ENCODE measurements at regions of chr13 and their contacts with region 1.

Region 1: DNA sequence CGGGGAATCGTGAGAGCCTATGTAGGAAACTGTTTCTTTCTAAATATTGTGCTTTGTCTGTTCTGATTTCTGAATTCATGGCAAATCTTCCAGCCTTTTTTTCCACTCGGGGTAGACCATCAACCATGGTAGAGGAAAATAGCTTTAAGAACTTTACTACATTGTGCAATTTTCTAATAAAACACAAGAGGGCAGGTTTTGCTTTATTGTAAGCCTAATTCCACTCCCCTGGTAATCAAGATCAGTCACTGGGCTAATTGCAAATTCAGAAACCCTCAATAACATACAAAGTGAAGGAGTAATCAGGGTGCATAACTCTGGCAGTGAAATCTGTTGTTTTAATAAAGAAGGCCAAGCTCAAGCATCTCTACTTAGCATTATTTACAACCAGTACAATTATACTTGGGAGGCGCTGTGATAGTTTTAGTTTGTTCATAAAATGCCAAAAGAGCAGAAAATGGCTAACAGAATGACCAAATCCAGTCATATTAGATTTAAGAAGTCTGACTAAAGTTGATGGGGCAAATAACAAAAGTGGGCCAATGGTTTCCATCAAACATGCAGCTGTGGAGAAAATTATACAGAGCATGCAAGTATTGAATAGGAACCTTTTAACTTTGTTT is 43.8 kb downstream of the DCT start:
- DNase-seq: no peak
- H3K4me3 Mint-ChIP-seq: no peak overlapping the region
- H3K27ac Mint-ChIP-seq: no peak overlapping the region
- H3K4me1 Mint-ChIP-seq: no peaks in the 10 kb centered on the region
- H3K27me3 Mint-ChIP-seq: no peaks in the 10 kb centered on the region
- CTCF ChIP-seq: no peak

Region 2: DNA sequence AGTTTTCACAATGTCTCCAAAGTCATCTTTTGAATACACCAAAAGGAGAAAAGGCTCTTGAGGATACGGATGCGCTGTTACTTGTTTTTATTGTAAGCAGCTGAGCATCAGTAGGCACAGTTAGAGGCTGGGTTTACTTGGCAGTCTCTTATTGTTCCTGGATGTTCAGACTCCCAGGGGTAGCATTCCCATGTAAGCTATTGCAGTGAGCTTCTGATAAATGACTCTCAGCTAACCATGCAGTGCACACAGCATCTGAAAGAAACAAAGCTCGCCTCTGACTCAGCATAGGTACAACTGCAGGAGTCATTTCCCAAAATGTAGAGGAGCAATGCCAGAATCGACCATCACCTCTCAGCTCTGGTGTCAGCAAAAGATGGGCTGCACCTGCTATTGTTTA is 41.0 kb before region 1 on chr13:
- CTCF ChIA-PET with region 1: no interaction called
- intact Hi-C with region 1: no loop called
- DNase-seq: no peak
- H3K4me3 Mint-ChIP-seq: no peak overlapping the region
- H3K27ac Mint-ChIP-seq: no peak overlapping the region
- H3K4me1 Mint-ChIP-seq: no peaks in the 10 kb centered on the region
- H3K27me3 Mint-ChIP-seq: no peaks in the 10 kb centered on the region
- CTCF ChIP-seq: no peak

Region 3: GRCh38 chr13:94549232-94550061 is 113.7 kb after region 1 on chr13:
- CTCF ChIA-PET with region 1: no interaction called
- intact Hi-C with region 1: loop called (anchors 10 kb)
- DNase-seq: peak; percentile 73
- H3K4me3 Mint-ChIP-seq: peak overlapping the region; percentile 71
- H3K27ac Mint-ChIP-seq: peak overlapping the region; percentile 94
- H3K4me1 Mint-ChIP-seq: no peaks in the 10 kb centered on the region
- H3K27me3 Mint-ChIP-seq: no peaks in the 10 kb centered on the region
- CTCF ChIP-seq: no peak

Region 4: DNA sequence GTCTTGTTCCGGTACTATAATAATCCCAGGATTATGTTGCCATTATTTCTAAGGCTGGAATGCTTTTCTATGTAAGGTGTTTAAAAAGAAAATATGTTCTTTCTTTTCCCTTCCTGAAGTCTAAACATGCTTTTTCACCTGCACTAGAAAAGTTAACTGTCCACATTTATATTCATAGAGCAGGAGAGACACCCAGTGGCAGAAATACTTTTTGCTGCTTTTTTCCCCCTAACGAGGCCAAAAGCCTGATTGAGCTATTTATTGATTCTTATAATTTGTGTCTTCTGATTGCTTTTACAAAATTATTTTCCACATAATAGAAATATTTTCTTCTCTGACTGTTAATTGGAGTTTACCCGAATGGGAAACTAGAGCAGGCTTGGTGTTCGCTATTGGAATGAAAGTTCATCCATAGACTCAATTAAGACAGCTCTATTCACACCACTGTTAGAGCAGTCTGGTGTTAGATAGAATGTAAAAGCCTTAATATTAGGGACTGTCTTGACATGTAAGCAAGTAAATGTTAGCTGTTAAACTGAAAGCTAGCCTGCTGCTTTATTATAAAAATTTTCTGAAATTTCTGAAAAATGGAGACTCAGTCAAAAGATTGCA is 181.8 kb after region 1 on chr13:
- CTCF ChIA-PET with region 1: interaction called, 6 read pairs
- intact Hi-C with region 1: loop called (anchors 1 kb)
- DNase-seq: peak; percentile 6
- H3K4me3 Mint-ChIP-seq: no peak overlapping the region
- H3K27ac Mint-ChIP-seq: no peak overlapping the region
- H3K4me1 Mint-ChIP-seq: no peaks in the 10 kb centered on the region
- H3K27me3 Mint-ChIP-seq: no peaks in the 10 kb centered on the region
- CTCF ChIP-seq: no peak

Measured in Calu3 (cell line).